HAP-1 (cell line): ENCODE measurements at regions of chr3 and their contacts with region 1.

Region 1: GRCh38 chr3:155701882-155702465 is 42.9 kb downstream of the PLCH1 start:
- DNase-seq: peak in 1 of 2 experiments; percentile 76
- H3K4me3 ChIP-seq: no peak overlapping the region
- H3K4me1 ChIP-seq: peaks cover 31% of the 10 kb centered on the region
- H3K27me3 ChIP-seq: no peaks in the 10 kb centered on the region

Region 2: GRCh38 chr3:155352900-155353490 is 349.0 kb before region 1 on chr3:
- in situ Hi-C with region 1: loop called (anchors 5 kb)
- DNase-seq: peak in 1 of 2 experiments; percentile 81
- H3K4me3 ChIP-seq: no peak overlapping the region
- H3K4me1 ChIP-seq: peaks cover 14% of the 10 kb centered on the region
- H3K27me3 ChIP-seq: no peaks in the 10 kb centered on the region

Region 3: DNA sequence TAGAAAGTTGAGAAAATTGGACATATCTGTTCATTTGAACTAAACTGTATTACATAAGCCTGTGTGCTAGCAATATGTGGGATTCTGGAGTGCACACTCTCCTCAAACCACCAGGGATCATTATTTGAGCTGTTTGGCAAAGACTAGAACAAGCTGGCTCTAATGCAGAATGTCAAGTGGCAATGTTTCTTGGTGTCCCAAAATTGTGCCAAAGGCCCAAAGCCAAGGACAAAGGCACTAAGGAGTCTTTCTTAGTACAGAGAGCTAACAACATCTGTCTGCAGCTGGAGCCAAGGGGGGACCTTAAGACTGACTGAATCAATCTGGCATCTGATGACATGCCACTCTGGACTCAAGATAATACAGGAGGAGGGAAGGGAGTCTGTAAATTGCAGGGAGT is 331.8 kb before region 1 on chr3:
- in situ Hi-C with region 1: no loop called
- DNase-seq: no peak
- H3K4me3 ChIP-seq: no peak overlapping the region
- H3K4me1 ChIP-seq: peaks cover 43% of the 10 kb centered on the region
- H3K27me3 ChIP-seq: no peaks in the 10 kb centered on the region

Region 4: GRCh38 chr3:155382396-155383042 is 319.5 kb before region 1 on chr3:
- in situ Hi-C with region 1: loop called (anchors 10 kb)
- DNase-seq: peak; percentile 76 to 91
- H3K4me3 ChIP-seq: no peak overlapping the region
- H3K4me1 ChIP-seq: peaks cover 17% of the 10 kb centered on the region
- H3K27me3 ChIP-seq: no peaks in the 10 kb centered on the region